ENCODE measurements at regions of chr16 and their contacts with region 1.

Region 1: DNA sequence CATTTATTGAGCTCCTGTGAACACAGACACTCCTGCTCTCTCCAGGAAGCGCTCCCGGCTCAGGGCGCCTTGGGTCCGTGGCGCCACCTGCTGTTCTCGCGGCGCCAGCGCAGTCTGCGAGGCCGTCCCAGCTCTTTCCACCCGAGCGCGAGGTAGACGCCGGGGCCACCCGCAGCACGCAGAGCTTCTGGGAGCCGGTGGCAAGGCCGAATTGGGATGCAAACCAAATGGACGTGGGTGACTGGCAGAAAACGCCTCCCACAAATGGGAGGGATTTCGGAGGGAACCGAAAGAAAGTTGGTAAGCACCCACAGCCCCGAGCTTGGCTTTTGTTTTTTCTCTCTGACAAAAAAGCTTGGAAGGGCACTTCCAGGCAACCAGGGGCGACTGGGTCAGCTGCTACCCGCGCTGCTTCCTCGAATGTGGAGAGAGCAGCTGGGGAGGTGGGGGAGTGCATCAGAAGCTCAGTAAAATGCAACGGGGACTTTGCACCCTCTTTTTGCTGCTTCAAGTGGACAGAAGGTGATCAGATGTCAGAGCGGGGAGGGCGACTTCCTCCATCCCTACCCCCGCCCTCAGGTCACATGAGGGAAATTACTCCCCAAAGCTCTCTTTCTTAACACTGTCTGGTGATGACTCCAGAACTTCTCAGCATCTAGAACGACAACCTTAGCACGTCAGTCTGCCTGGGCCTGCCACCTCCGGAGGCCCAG is 13.5 kb upstream of the N4BP1 start:
- DNase-seq: peak; percentile 81
- ATAC-seq: peak; percentile 93
- H3K4me3 Mint-ChIP-seq: peak overlapping the region; percentile 83
- H3K27ac Mint-ChIP-seq: peak overlapping the region; percentile 27; the same call in 1 of the 2 replicates
- H3K4me1 Mint-ChIP-seq: peaks cover 10% of the 10 kb centered on the region
- H3K27me3 Mint-ChIP-seq: no peaks in the 10 kb centered on the region; the same call in 1 of the 2 replicates
- CTCF ChIP-seq: peak; percentile 90

Region 2: DNA sequence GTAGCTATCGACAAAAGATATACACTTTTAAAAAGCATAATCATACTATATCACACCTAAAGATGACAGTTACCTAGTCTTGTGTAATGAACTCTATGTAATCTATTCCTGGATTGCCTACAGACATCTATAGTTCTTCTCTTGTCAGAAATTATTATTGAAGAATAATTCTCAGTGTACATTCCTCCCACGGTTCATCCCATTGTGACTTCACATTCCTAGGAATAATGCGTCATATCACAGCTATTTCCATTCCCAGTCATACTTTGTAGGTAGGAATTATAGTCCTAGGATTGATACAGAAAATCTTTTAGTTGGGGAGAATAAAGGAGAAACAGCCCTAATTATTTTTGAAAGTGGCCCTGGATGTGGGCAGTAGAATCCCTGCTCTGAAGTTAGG is 332.2 kb before region 1 on chr16:
- CTCF ChIA-PET with region 1: interaction called, 10 read pairs
- POLR2A ChIA-PET with region 1: no interaction called
- DNase-seq: no peak
- ATAC-seq: no peak
- H3K4me3 Mint-ChIP-seq: no peak overlapping the region
- H3K27ac Mint-ChIP-seq: no peak overlapping the region
- H3K4me1 Mint-ChIP-seq: peaks cover 20% of the 10 kb centered on the region
- H3K27me3 Mint-ChIP-seq: no peaks in the 10 kb centered on the region
- CTCF ChIP-seq: no peak

Region 3: DNA sequence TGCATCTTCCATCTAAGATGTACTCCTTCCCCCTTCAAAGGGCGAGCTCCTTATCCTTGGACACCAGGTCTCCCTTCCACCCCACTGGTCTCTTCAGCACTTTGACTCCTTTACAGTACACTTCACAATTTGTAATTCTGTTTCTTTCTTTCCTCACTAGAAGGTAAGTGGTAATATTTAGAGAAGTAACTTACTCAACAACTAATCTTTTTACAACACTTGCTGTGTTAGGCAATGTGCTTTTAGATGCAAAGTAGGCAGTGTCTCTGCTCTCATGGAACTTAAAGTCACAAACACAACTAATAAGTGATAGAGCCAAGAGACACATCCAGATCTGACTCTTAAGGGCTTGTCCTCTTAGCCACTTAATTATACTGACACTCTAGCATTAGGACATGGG is 244.6 kb before region 1 on chr16:
- CTCF ChIA-PET with region 1: interaction called, 13 read pairs
- POLR2A ChIA-PET with region 1: no interaction called
- DNase-seq: no peak
- ATAC-seq: no peak
- H3K4me3 Mint-ChIP-seq: no peak overlapping the region
- H3K27ac Mint-ChIP-seq: peak overlapping the region; percentile 36
- H3K4me1 Mint-ChIP-seq: peaks cover 54% of the 10 kb centered on the region
- H3K27me3 Mint-ChIP-seq: no peaks in the 10 kb centered on the region
- CTCF ChIP-seq: no peak

Region 4: GRCh38 chr16:48534601-48535340 is 88.7 kb before region 1 on chr16:
- CTCF ChIA-PET with region 1: interaction called, 63 read pairs
- POLR2A ChIA-PET with region 1: interaction called, 4 read pairs
- DNase-seq: no peak
- ATAC-seq: no peak
- H3K4me3 Mint-ChIP-seq: no peak overlapping the region
- H3K27ac Mint-ChIP-seq: 0 out of 2 replicates have a peak overlapping the region, but pooled peaks have one; percentile 19
- H3K4me1 Mint-ChIP-seq: peaks cover 8% of the 10 kb centered on the region; the same call in 1 of the 2 replicates
- H3K27me3 Mint-ChIP-seq: no peaks in the 10 kb centered on the region
- CTCF ChIP-seq: no peak

Region 5: GRCh38 chr16:48576927-48577326 is 46.5 kb before region 1 on chr16:
- CTCF ChIA-PET with region 1: interaction called, 11 read pairs
- POLR2A ChIA-PET with region 1: no interaction called
- DNase-seq: no peak
- ATAC-seq: no peak
- H3K4me3 Mint-ChIP-seq: no peak overlapping the region
- H3K27ac Mint-ChIP-seq: no peak overlapping the region
- H3K4me1 Mint-ChIP-seq: peaks cover 13% of the 10 kb centered on the region
- H3K27me3 Mint-ChIP-seq: no peaks in the 10 kb centered on the region
- CTCF ChIP-seq: no peak